A673 (cell line): ENCODE measurements at regions of chr1 and their contacts with region 1.

Region 1: DNA sequence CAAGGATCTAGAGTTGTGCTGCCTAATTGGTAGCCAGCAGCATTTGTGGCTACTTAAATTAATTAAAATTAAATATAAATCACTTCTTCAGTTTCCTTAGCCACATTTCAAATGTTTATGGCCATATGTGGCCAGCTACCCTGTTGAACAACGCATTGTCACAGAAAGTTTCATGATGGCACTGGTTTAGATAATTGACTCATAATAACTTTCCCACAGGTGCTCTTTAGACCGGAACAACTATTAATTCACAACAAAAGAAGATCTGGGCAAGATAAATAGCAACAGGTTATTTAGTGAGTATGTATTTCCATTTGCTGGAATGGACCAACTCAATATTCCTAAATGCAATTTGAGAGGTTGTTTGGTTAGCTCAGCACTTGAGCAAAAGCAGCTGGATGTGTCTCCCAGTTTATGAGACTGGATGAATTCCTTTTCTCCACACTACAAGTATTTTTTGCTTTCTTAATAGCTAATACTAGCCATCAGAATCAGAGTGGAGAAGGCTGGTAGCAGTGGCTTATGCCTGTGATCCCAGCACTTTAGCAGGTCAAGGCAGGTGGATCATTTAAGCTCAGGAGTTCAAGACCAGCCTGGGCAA is 3.7 kb upstream of the AMIGO1 start:
- DNase-seq: no peak
- H3K4me3 ChIP-seq: no peak overlapping the region
- H3K27ac ChIP-seq: no peak overlapping the region
- H3K4me1 ChIP-seq: peaks cover 7% of the 10 kb centered on the region
- H3K27me3 ChIP-seq: no peaks in the 10 kb centered on the region
- CTCF ChIP-seq: no peak

Region 2: DNA sequence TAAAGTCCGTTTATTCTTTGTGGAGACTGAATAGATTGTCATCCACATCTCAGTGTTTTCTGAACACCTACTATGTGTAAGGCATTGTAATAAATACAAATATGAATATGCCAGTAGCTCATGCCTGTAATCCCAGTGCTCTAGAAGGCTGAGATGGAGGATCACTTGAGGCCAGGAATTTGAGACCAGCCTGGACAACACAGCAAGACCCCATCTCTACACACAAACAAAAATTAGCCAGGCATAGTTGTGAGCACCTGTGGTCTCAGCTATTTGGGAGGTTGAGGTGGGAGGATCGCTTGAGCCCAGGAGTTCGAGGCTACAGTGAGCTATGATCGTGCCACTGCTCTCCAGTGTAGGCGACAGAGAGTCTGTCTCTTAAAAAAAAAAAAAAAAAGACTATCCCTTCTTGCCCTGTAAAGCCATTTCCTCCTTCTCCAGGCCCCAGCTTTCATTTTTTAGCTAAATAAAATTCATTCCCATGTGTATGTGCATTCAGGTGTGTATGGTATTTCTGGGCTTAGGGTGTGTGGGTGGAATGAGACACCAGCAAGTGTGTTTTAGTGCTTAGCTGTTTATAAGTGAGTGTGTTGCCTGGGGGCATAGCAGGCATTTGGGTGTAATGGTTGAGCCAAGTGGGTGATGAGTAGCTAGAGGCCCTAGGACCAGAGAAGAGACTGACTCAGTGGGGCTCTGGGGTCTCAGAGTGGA is 256.1 kb before region 1 on chr1:
- CTCF ChIA-PET with region 1: no interaction called
- POLR2A ChIA-PET with region 1: interaction called, 13 read pairs
- intact Hi-C with region 1: no loop called
- DNase-seq: no peak
- H3K4me3 ChIP-seq: no peak overlapping the region
- H3K27ac ChIP-seq: no peak overlapping the region
- H3K4me1 ChIP-seq: peaks cover 20% of the 10 kb centered on the region
- H3K27me3 ChIP-seq: no peaks in the 10 kb centered on the region
- CTCF ChIP-seq: no peak

Region 3: GRCh38 chr1:109523706-109524105 is 10.5 kb after region 1 on chr1:
- CTCF ChIA-PET with region 1: no interaction called
- POLR2A ChIA-PET with region 1: no interaction called
- intact Hi-C with region 1: no loop called
- DNase-seq: no peak
- H3K4me3 ChIP-seq: no peak overlapping the region
- H3K27ac ChIP-seq: no peak overlapping the region
- H3K4me1 ChIP-seq: no peaks in the 10 kb centered on the region
- H3K27me3 ChIP-seq: no peaks in the 10 kb centered on the region
- CTCF ChIP-seq: no peak